ENCODE measurements at regions of chr22 and their contacts with region 1.

Region 1: DNA sequence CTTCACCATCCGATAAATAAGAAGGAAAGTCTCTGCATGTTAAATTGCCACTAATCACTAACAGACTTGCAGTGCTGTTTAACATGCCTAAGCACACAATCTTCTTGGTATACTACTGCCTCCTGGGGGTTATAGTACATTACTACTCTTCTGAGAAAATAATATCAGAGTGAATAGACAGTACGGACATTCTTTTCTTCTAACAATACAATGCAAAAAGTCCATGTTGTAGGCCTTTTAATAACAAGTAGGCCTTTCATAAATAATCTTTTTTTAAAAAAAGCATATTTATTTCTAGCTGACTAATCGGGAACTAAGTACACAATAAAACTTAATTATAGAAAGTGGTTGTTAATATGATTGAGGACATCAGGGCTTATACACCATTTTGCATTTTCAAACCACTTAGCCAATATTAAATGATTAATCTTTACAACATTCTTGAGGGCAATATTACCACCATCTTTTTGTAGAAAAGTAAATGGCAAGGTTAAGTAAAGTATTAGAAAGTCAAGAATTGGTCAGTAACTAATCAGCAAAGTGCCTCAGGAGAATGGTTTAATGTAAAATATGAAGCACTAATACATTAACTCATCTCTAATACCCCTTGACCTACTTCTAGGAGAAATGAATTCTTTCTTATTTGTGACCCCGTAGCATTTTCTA is 84.7 kb downstream of the TTC28 start:
- DNase-seq: peak; percentile 86
- H3K4me3 ChIP-seq: no peak overlapping the region
- H3K27ac ChIP-seq: no peak overlapping the region
- H3K4me1 ChIP-seq: peaks cover 15% of the 10 kb centered on the region
- H3K27me3 ChIP-seq: no peaks in the 10 kb centered on the region

Region 2: GRCh38 chr22:28268171-28268570 is 326.8 kb before region 1 on chr22:
- in situ Hi-C with region 1: loop called (anchors 10 kb)
- DNase-seq: peak; percentile 25
- H3K4me3 ChIP-seq: no peak overlapping the region
- H3K27ac ChIP-seq: no peak overlapping the region
- H3K4me1 ChIP-seq: peaks cover 11% of the 10 kb centered on the region
- H3K27me3 ChIP-seq: no peaks in the 10 kb centered on the region

Region 3: GRCh38 chr22:28772633-28773460 is 177.9 kb after region 1 on chr22 and contains the start of gene CCDC117:
- in situ Hi-C with region 1: no loop called
- DNase-seq: peak; percentile 98
- H3K4me3 ChIP-seq: peak within 1 kb of the TSS; percentile 82
- H3K27ac ChIP-seq: peak within 1 kb of the TSS; percentile 92
- H3K4me1 ChIP-seq: 0 out of 2 replicates have a peak, but pooled peaks cover 8% of the 10 kb centered on the region
- H3K27me3 ChIP-seq: no peaks in the 10 kb centered on the region
- total RNA-seq, gene CCDC117: 24.2 and 25.2 TPM in 2 replicates